ENCODE measurements at regions of chr2 and their contacts with region 1.

Region 1: GRCh38 chr2:231134910-231135655 is 10.2 kb upstream of the HTR2B start:
- DNase-seq: no peak
- ATAC-seq: no peak
- H3K4me3 Mint-ChIP-seq: no peak overlapping the region
- H3K27ac Mint-ChIP-seq: peak overlapping the region; percentile 48
- H3K4me1 Mint-ChIP-seq: peaks cover 24% of the 10 kb centered on the region
- H3K27me3 Mint-ChIP-seq: no peaks in the 10 kb centered on the region
- CTCF ChIP-seq: no peak

Region 2: DNA sequence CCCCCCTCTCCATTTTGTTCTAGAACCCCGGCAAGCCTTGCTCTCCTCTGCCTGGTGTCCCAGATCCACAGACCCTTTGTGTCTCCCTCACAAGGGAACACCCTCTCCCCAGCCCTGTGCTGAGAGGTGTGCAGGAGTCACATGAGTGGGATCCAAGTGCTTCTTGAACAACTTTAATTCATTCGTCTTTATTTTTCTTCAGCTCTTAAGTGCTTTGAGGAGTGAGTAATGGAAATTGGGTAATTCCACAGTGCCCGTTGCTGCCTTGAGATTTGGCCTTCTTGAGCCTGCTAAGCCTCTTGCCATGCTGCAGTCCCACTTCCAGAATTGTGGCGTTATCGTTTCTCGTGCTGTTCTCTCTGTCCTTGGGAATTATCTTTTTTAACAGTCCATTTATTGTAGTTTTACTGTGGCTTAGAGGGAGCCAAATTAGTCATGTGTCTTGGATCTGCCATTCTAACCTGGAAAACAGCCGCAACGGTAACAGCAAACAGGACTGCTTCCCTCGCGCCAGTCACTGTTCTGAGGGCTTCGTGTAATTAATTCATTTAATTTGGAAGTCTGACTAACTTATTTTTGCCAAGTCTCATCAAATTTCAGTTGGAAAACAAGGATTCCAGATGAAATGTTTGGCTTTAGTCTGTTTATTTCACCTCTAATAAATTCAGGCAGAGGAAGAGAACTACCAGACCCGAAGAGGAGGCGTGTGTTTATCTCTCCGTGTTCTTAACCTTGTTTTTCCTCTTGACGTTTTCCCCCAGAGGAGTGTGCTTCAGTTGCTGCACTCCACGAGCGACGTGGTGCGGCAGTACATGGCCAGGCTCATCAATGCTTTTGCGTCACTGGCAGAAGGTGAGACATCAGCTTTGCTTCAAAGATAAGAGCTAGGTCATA is 135.4 kb after region 1 on chr2:
- CTCF ChIA-PET with region 1: no interaction called
- POLR2A ChIA-PET with region 1: no interaction called
- intact Hi-C with region 1: no loop called
- DNase-seq: no peak
- ATAC-seq: no peak
- H3K4me3 Mint-ChIP-seq: no peak overlapping the region
- H3K27ac Mint-ChIP-seq: no peak overlapping the region
- H3K4me1 Mint-ChIP-seq: peaks cover 5% of the 10 kb centered on the region
- H3K27me3 Mint-ChIP-seq: no peaks in the 10 kb centered on the region
- CTCF ChIP-seq: no peak

Region 3: GRCh38 chr2:231452799-231453508 is 317.9 kb after region 1 on chr2:
- CTCF ChIA-PET with region 1: no interaction called
- POLR2A ChIA-PET with region 1: interaction called, 14 read pairs
- intact Hi-C with region 1: no loop called
- DNase-seq: no peak
- ATAC-seq: no peak
- H3K4me3 Mint-ChIP-seq: no peak overlapping the region
- H3K27ac Mint-ChIP-seq: no peak overlapping the region
- H3K4me1 Mint-ChIP-seq: peaks cover 7% of the 10 kb centered on the region
- H3K27me3 Mint-ChIP-seq: no peaks in the 10 kb centered on the region
- CTCF ChIP-seq: no peak